BJ (cell line): ENCODE measurements at regions of chr20 and their contacts with region 1.

Region 1: GRCh38 chr20:956330-956951 is 40.3 kb upstream of the ANGPT4 start:
- DNase-seq: no peak
- H3K4me3 ChIP-seq: no peak overlapping the region
- H3K27me3 ChIP-seq: peaks cover 2% of the 10 kb centered on the region; the same call in 1 of the 2 replicates
- CTCF ChIP-seq: peak; percentile 97

Region 2: DNA sequence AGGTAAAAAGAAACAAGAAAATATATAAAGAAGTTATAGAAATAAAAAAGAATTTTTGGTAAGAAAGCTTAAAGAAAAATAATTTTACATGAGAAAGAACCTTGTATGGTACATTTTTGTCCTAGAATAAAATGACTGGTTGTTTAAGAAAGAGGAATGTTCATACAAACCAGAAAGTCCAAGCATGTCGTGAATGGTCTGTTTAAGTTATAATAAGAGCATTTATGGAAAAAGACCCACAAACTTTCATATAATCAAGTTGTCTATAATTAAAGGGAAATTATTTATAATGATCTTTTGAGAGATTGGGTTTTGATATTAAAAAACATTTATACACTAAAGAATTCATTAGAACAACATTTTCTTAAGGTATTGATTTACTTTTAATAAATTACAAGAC is 150.7 kb before region 1 on chr20:
- CTCF ChIA-PET with region 1: interaction called, 34 read pairs
- POLR2A ChIA-PET with region 1: no interaction called
- DNase-seq: no peak
- H3K4me3 ChIP-seq: no peak overlapping the region
- H3K27me3 ChIP-seq: no peaks in the 10 kb centered on the region
- CTCF ChIP-seq: no peak

Region 3: DNA sequence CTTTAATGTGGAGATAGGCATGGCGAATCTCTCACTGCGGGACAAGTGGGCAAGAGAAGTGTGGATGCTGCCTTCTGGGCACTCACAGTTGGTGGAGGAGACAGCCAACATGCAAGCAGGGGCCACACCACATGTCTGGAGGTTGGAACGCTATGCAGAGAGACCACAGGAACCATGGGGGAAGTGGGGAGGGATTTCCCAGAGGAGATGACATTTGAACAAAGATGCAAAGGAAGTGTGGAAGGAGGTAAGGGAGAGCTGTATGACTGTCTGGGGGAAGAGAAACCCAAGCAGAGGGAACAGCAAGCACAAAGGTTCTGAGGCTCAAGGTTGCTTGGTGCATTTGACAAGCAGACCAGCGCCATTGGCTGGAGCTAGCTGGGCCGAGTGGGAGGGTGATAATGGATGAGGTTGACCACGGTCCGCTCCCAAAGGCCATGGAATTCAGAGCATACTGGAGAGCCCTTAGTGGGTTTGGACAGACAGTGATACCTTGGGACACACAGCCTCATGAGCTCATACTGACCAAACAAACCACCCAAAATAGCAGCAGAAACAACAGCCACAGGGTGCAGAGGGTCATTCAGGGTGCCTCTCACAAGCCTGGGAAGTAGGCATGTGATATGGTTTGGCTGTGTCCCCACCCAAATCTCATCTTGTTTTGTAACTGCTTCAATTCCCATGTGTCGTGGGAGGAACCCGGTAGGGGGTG is 130.6 kb before region 1 on chr20:
- CTCF ChIA-PET with region 1: interaction called, 318 read pairs
- POLR2A ChIA-PET with region 1: no interaction called
- DNase-seq: no peak
- H3K4me3 ChIP-seq: no peak overlapping the region
- H3K27me3 ChIP-seq: no peaks in the 10 kb centered on the region
- CTCF ChIP-seq: no peak

Region 4: DNA sequence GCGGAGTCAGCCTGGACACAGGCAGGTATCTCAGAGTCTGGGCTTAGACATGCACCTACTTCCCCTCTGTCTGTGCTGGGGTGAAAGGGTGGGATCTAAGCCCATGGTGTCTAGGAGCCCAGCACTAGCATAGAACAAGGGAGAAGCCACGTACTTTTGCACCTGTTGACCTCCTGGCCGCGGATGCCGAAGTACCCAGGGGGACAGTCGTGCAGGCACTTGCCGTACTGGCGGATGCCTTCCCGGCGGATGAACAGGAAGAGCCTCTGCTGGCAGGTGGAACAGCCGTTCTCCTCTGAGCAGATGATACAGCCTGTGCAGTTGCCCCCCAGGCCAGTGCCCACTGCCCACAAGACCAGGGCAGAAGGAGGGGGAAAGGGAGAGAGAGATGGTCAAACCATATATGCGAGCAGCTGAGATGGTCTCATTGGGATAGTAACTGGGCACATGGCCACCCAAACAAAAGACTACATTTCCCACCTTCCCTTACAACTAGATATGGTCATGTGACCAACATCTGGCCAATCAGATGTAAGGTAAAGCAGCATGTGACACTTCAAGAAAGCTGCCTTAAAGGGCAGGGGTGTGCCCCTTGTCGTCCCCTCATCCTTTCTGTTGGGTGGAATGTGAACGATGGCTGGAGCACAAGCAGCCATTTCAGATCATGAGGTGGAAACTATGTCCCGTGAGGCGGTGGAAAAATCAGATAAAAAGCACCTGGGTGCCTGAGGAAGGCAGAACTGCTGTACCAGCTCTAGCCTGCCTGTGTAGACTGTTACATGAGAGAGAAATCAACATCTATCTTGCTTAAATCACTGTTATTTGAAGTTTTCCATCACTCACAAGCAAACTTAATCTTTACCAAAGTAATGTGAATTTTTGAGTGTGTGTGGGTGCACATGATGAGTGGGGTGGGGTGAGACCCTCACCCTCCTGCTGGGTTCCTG is 11.6 kb after region 1 on chr20:
- CTCF ChIA-PET with region 1: interaction called, 33 read pairs
- POLR2A ChIA-PET with region 1: no interaction called
- DNase-seq: no peak
- H3K4me3 ChIP-seq: no peak overlapping the region
- H3K27me3 ChIP-seq: no peaks in the 10 kb centered on the region
- CTCF ChIP-seq: no peak

Region 5: DNA sequence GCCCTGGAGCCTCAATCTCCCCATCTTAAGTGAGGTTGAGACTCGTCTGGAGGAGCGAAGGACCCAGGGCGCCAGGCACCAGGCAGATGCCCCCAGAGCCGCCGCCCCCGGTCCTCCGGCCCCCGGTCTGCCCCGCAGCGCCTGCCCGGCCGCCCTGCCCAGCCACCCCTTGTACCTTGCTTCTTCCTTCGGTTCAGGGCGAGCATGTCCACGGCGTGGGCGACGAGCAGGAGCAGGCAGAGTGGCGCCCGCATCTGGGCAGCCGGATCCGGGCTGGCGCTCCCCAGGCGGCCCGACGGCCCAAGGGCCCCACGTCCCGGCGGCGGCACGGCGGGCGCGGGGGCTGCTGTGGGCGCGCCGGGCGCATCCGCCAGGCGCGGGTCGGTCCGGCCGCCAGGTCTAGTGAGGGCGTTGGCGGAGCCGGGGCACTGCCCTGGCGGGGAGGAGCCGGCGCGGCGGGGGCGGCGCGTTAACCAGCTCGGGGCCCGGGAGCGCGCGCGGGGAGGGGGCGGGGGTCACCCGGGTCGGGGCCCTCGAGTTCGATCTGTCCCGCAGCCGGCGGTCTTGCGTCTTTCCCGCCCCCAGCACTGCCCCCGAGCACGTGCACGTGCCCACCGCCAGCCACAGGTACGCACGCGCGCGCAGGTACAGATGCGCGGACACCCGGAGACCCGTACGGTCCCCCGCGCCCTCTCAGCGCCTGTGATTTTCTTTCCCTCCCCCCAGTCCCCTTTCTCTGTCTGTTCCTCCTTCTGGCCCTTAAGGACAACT is 45.7 kb after region 1 on chr20 and contains the start of gene RSPO4:
- CTCF ChIA-PET with region 1: no interaction called
- POLR2A ChIA-PET with region 1: no interaction called
- DNase-seq: no peak
- H3K4me3 ChIP-seq: peak within 1 kb of the TSS; percentile 25
- H3K27me3 ChIP-seq: peaks cover 7% of the 10 kb centered on the region
- CTCF ChIP-seq: no peak
- polyA plus RNA-seq, gene RSPO4: 0.32 and 0.52 TPM in 2 replicates

Region 6: GRCh38 chr20:1108437-1108920 is 152.0 kb after region 1 on chr20:
- CTCF ChIA-PET with region 1: interaction called, 21 read pairs
- POLR2A ChIA-PET with region 1: no interaction called
- DNase-seq: no peak
- H3K4me3 ChIP-seq: no peak overlapping the region
- H3K27me3 ChIP-seq: no peaks in the 10 kb centered on the region; the same call in none of the 2 replicates
- CTCF ChIP-seq: peak; percentile 89